Activated T-helper 1 cell treated with anti-CD3 and anti-CD28 coated beads, Interleukin-12 subunit alpha, Interleukin-12 subunit beta, Interleukin-2, Interleukin-4 antibody, amounts not matched to agents 30 ng/mL and 10 ng/mL and 1 ng/mL, durations not matched to agents 14 hours and 24 hours and 36 hours (primary cell): ENCODE measurements at regions of chr16 and their contacts with region 1.

Region 1: GRCh38 chr16:27253526-27253930 is 15.0 kb downstream of the NSMCE1 start:
- DNase-seq: no peak
- H3K4me3 Mint-ChIP-seq: peak overlapping the region; percentile 59
- H3K27ac Mint-ChIP-seq: peak overlapping the region; percentile 88
- H3K4me1 Mint-ChIP-seq: peaks cover 82% of the 10 kb centered on the region
- H3K27me3 Mint-ChIP-seq: no peaks in the 10 kb centered on the region

Region 2: GRCh38 chr16:25257504-25257955 is 1996.0 kb before region 1 on chr16 and contains the start of gene ZKSCAN2:
- intact Hi-C with region 1: loop called (anchors 5 kb)
- DNase-seq: peak; percentile 83
- H3K4me3 Mint-ChIP-seq: peak within 1 kb of the TSS; percentile 91
- H3K27ac Mint-ChIP-seq: peak within 1 kb of the TSS; percentile 97
- H3K4me1 Mint-ChIP-seq: peaks cover 53% of the 10 kb centered on the region
- H3K27me3 Mint-ChIP-seq: peaks cover 2% of the 10 kb centered on the region
- total RNA-seq, gene ZKSCAN2: 6.1 and 6.4 TPM in 2 replicates

Region 3: DNA sequence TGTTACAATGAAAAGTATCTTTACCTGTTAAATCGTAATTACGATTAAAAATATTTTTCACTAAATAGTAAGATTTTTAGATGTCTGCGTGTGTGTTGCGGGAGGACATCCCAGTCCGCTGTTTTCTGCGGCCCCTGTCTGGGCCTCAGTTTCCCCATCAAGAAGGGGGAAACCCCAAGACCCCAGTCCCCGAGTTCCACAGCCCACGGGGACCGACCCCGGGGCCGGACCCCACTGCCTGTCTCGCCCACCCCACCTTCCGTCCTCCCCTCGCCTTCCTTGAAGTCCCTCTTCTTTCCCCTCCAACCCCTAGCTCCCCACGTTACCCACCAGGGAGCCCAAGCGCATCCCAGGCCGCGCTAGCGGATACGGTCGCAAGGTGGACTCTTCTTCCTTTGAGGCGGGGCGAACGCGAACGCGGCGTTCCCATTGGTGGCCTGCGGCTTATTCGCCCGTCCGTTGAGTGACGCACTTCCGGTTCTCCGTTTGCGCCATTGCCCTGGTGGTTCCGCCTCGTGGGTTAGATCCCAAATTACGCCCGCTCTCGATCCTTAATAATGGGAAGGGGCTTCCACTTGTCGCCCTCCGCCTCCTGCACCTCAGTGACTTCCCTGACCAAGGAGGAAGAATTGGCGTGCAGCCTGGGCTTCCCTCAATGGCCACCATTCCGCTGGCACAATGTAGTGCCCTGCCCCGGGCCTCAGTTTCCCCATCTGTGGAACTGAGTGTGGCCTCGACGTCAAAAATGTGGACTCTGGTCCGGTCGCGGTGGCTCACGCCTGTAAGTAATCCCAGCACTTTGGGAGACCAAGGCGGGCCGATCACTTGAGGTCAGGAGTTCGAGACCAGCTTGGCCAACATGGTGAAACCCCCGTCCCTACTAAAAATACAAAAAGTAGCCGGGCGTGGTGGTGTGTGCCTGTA is 15.1 kb after region 1 on chr16 and contains the start of gene NSMCE1:
- intact Hi-C with region 1: loop called (anchors 1 kb)
- DNase-seq: peak; percentile 94
- H3K4me3 Mint-ChIP-seq: peak within 1 kb of the TSS; percentile 96
- H3K27ac Mint-ChIP-seq: peak within 1 kb of the TSS; percentile 97
- H3K4me1 Mint-ChIP-seq: peaks cover 75% of the 10 kb centered on the region
- H3K27me3 Mint-ChIP-seq: no peaks in the 10 kb centered on the region
- total RNA-seq, gene NSMCE1: 128 and 134 TPM in 2 replicates

Region 4: GRCh38 chr16:27286451-27286850 is 32.9 kb after region 1 on chr16:
- intact Hi-C with region 1: loop called (anchors 1 kb)
- DNase-seq: no peak
- H3K4me3 Mint-ChIP-seq: no peak overlapping the region
- H3K27ac Mint-ChIP-seq: no peak overlapping the region
- H3K4me1 Mint-ChIP-seq: peaks cover 72% of the 10 kb centered on the region
- H3K27me3 Mint-ChIP-seq: peaks cover 6% of the 10 kb centered on the region

Region 5: GRCh38 chr16:27318392-27319226 is 65.1 kb after region 1 on chr16:
- intact Hi-C with region 1: loop called (anchors 1 kb)
- DNase-seq: peak; percentile 58
- H3K4me3 Mint-ChIP-seq: peak overlapping the region; percentile 94
- H3K27ac Mint-ChIP-seq: peak overlapping the region; percentile 99
- H3K4me1 Mint-ChIP-seq: peaks cover 71% of the 10 kb centered on the region
- H3K27me3 Mint-ChIP-seq: no peaks in the 10 kb centered on the region

Region 6: GRCh38 chr16:27355610-27356009 is 102.1 kb after region 1 on chr16:
- intact Hi-C with region 1: no loop called
- DNase-seq: no peak
- H3K4me3 Mint-ChIP-seq: no peak overlapping the region
- H3K27ac Mint-ChIP-seq: peak overlapping the region; percentile 59
- H3K4me1 Mint-ChIP-seq: peaks cover 26% of the 10 kb centered on the region
- H3K27me3 Mint-ChIP-seq: no peaks in the 10 kb centered on the region